Panc1 (cell line): ENCODE measurements at regions of chr5 and their contacts with region 1.

Region 1: GRCh38 chr5:132829742-132830435 is 558 bp downstream of the SHROOM1 start:
- DNase-seq: peak; percentile 30
- ATAC-seq: peak; percentile 92
- H3K4me3 ChIP-seq: peak overlapping the region; percentile 56 to 60
- H3K27ac ChIP-seq: peak overlapping the region; percentile 40
- H3K4me1 ChIP-seq: peaks cover 6% of the 10 kb centered on the region; the same call in 1 of the 2 replicates
- H3K27me3 ChIP-seq: no peaks in the 10 kb centered on the region
- CTCF ChIP-seq: peak; percentile 97

Region 2: DNA sequence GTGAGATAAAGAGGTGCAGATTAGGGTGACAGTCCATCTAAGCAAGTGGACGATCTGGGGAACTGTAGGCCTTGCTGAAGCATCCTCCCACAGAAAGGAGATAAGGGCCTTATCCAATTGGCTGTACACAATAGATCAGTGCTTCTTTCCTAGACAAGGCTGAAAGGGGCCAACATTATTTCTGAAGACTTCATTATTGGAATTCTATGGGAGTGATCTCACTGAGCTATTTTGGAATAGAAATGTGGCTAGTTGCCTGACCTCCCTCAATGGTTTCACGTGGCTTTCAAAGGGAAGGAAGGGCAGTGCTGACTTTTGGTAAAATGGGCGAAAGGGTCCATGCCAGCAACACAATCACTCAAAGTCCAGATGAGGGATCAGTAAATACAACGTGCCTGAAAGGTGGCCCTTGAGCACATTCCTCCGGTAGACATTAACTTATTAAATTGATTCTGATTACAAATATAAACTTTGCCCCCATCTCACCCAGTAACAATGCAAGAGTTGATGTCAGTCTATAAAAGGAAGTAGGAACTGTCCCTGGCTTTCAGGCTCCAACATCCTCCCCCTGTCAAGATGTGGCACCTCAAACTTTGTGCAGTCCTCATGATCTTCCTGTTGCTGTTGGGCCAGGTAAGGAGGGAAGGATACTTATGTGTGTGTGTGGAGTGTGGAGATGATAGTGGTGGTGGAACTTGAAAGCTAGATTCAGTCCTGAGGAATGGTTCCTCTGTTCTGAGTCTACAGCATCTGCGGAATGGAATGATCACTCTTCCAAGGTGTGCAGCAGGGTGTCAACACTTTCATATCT is 43.4 kb after region 1 on chr5 and contains the start of gene LEAP2:
- CTCF ChIA-PET with region 1: no interaction called
- POLR2A ChIA-PET with region 1: no interaction called
- in situ Hi-C with region 1: no loop called
- intact Hi-C with region 1: no loop called
- DNase-seq: no peak
- ATAC-seq: no peak
- H3K4me3 ChIP-seq: no peak within 1 kb of the TSS
- H3K27ac ChIP-seq: no peak within 1 kb of the TSS
- H3K4me1 ChIP-seq: peaks cover 4% of the 10 kb centered on the region; the same call in 1 of the 2 replicates
- H3K27me3 ChIP-seq: no peaks in the 10 kb centered on the region
- CTCF ChIP-seq: no peak
- total RNA-seq, gene LEAP2: 1.4 TPM

Region 3: DNA sequence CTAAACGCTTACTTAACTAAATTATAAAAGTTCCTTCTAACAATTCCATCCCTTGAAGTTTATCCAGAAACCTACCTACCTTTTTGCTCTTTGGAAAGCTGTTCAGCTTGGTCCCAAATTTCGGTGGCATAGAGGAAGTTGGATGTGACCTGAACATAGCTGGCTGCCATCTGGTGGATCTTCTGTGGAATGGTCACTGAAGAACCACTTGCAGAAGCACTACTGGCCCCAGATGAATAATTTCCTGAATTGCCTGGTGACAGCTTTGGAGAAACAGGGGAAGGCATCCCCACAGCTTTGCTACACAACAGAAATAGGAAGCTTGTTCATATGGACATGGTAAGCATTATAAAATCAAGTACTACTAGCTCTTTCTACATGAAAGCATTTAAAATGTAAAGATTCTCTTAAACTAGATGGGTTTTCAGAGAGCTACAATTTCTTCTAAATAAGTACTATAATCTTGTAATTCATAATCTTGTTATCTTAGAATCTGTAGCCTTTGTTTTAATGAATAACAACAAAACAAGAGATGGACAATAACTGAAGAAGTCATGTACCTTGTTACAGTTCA is 53.5 kb after region 1 on chr5:
- CTCF ChIA-PET with region 1: interaction called, 8 read pairs
- POLR2A ChIA-PET with region 1: no interaction called
- in situ Hi-C with region 1: no loop called
- intact Hi-C with region 1: loop called (anchors 2 kb)
- DNase-seq: no peak
- ATAC-seq: peak; percentile 97
- H3K4me3 ChIP-seq: no peak overlapping the region
- H3K27ac ChIP-seq: no peak overlapping the region
- H3K4me1 ChIP-seq: no peaks in the 10 kb centered on the region
- H3K27me3 ChIP-seq: no peaks in the 10 kb centered on the region
- CTCF ChIP-seq: peak; percentile 83